Sciatic nerve (tissue), 2 donors: ENCODE measurements at regions of chr1 and their contacts with region 1.

Region 1: GRCh38 chr1:162329826-162330225 is 46.8 kb downstream of the SPATA46 start:
- DNase-seq: no peak
- ATAC-seq: peak; percentile 55

Region 2: DNA sequence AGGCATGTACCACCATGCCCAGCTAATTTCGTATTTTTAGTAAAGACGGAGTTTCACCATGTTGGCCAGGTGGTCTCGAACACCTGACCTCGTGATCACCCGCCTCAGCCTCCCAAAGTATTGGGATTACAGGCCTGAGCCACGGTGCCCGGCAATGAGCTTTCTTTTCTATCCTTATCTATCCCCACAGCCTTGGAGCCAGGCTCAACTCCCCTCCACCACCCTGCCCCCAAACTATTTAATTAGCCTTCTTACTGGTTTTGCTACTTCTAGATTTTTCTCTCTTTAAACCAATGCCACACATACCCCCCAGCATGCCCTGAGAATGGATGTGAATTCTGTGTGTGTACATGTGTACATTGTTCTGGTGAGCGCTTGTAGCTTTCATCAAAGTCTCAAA is 1935.2 kb before region 1 on chr1:
- intact Hi-C with region 1: loop called (anchors 5 kb)
- DNase-seq: no peak
- ATAC-seq: no peak

Region 3: GRCh38 chr1:161946071-161946987 is 383.5 kb before region 1 on chr1:
- intact Hi-C with region 1: no loop called
- DNase-seq: no peak
- ATAC-seq: no peak

Region 4: DNA sequence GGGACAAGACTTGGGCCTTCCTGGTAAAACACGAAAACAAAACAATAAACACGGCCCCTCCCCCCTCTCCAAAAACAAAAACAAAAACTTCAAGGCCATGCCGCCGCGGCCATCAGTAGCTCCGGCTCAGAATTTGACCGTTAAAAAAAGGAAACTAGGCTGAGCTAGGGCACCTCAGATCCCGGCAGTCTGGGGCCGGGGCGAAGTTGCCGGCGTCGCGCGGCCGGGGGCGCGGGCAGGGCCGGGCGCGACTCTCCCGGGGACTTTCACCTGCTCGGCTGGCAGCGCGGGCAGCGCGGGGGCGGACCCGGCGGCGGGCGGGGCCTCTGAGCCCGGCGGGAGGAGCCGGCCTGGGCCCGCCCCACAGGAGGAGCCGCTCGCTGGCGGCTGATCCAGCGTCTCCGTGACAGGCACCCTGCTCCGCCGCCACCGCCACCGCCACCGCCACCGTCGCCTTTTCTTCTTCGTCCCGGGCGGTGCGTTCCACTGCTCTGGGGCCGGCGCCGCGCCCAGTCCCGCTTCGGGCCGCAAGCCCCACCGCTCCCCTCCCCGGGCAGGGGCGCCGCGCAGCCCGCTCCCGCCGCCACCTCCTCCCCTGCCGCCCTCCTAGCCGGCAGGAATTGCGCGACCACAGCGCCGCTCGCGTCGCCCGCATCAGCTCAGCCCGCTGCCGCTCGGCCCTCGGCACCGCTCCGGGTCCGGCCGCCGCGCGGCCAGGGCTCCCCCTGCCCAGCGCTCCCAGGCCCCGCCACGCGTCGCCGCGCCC is 260.3 kb before region 1 on chr1 and contains the start of gene NOS1AP:
- intact Hi-C with region 1: no loop called
- DNase-seq: peak; percentile 88
- ATAC-seq: peak; percentile 94
- total RNA-seq, gene NOS1AP: 9.1 TPM

Region 5: GRCh38 chr1:162094271-162094670 is 235.6 kb before region 1 on chr1:
- intact Hi-C with region 1: no loop called
- DNase-seq: no peak
- ATAC-seq: no peak

Region 6: DNA sequence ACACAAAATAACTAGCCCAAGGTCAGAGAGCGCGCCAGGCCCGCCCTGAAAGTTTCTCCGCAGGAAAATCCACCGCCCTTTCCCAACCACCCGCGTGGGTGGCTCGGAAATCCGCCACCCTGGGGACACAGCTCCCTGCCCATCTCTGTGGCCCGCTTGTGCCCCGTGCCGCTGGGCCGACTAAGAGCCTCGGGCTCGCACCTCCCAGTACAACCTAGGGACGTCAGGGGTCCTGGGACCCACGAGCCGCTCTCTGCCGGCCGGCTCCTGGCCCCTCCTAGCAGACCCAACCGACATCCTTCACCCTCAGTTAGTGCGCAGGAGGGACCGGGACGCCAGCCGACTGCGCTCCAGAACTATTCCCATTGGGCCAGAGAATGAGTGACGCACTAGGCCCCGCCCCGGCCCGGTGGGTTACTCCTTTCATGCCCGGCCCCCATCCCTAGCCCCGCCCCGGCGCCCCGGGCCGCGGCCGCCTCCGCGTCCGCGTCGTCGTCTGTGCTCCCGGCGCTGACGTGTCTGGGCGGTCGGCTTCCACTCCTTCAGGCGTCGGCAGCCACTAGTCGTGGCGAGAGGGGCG is 231.3 kb after region 1 on chr1:
- intact Hi-C with region 1: no loop called
- DNase-seq: peak; percentile 99
- ATAC-seq: peak; percentile 98